IMR-90 (cell line): ENCODE measurements at regions of chrX and their contacts with region 1.

Region 1: GRCh38 chrX:113001836-113002235 is 161.2 kb upstream of the AMOT start:
- DNase-seq: no peak
- ATAC-seq: no peak
- H3K4me3 ChIP-seq: no peak overlapping the region
- H3K27ac ChIP-seq: no peak overlapping the region
- H3K4me1 ChIP-seq: no peaks in the 10 kb centered on the region
- H3K27me3 ChIP-seq: no peaks in the 10 kb centered on the region; the same call in 1 of the 2 replicates
- CTCF ChIP-seq: no peak
- POLR2A ChIP-seq: no peak
- RAD21 ChIP-seq: no peak

Region 2: GRCh38 chrX:113539599-113540356 is 537.9 kb after region 1 on chrX:
- CTCF ChIA-PET with region 1: interaction called, 10 read pairs
- POLR2A ChIA-PET with region 1: no interaction called
- dilution Hi-C with region 1: no loop called
- in situ Hi-C with region 1: no loop called
- intact Hi-C with region 1: no loop called
- DNase-seq: no peak
- ATAC-seq: no peak
- H3K4me3 ChIP-seq: no peak overlapping the region
- H3K27ac ChIP-seq: no peak overlapping the region
- H3K4me1 ChIP-seq: no peaks in the 10 kb centered on the region
- H3K27me3 ChIP-seq: no peaks in the 10 kb centered on the region; the same call in 1 of the 2 replicates
- CTCF ChIP-seq: no peak
- POLR2A ChIP-seq: no peak
- RAD21 ChIP-seq: no peak